Calu3 (cell line): ENCODE measurements at regions of chr9 and their contacts with region 1.

Region 1: GRCh38 chr9:85431339-85432102 is 310.2 kb downstream of the AGTPBP1 start:
- DNase-seq: no peak
- H3K4me3 Mint-ChIP-seq: no peak overlapping the region
- H3K27ac Mint-ChIP-seq: no peak overlapping the region
- H3K4me1 Mint-ChIP-seq: peaks cover 32% of the 10 kb centered on the region
- H3K27me3 Mint-ChIP-seq: peaks cover 29% of the 10 kb centered on the region
- CTCF ChIP-seq: no peak

Region 2: GRCh38 chr9:85610074-85610860 is 178.7 kb after region 1 on chr9:
- CTCF ChIA-PET with region 1: interaction called, 5 read pairs
- intact Hi-C with region 1: loop called (anchors 5 kb)
- DNase-seq: peak; percentile 31
- H3K4me3 Mint-ChIP-seq: no peak overlapping the region
- H3K27ac Mint-ChIP-seq: peak overlapping the region; percentile 56
- H3K4me1 Mint-ChIP-seq: peaks cover 9% of the 10 kb centered on the region
- H3K27me3 Mint-ChIP-seq: no peaks in the 10 kb centered on the region
- CTCF ChIP-seq: peak; percentile 47